Esophagus squamous epithelium (tissue), 5 donors: ENCODE measurements at regions of chr9 and their contacts with region 1.

Region 1: GRCh38 chr9:115013998-115014397 is 83.6 kb upstream of the TNFSF8 start:
- DNase-seq: peak; percentile 15
- H3K4me3 ChIP-seq: no peak overlapping the region
- H3K27ac ChIP-seq: no peak overlapping the region
- H3K4me1 ChIP-seq: peaks cover 0 to 13% (median 7%) of the 10 kb centered on the region in 3 donors
- H3K27me3 ChIP-seq: no peaks in the 10 kb centered on the region
- CTCF ChIP-seq: peak; percentile 78 to 92 (median 86)
- POLR2A ChIP-seq: no peak

Region 2: DNA sequence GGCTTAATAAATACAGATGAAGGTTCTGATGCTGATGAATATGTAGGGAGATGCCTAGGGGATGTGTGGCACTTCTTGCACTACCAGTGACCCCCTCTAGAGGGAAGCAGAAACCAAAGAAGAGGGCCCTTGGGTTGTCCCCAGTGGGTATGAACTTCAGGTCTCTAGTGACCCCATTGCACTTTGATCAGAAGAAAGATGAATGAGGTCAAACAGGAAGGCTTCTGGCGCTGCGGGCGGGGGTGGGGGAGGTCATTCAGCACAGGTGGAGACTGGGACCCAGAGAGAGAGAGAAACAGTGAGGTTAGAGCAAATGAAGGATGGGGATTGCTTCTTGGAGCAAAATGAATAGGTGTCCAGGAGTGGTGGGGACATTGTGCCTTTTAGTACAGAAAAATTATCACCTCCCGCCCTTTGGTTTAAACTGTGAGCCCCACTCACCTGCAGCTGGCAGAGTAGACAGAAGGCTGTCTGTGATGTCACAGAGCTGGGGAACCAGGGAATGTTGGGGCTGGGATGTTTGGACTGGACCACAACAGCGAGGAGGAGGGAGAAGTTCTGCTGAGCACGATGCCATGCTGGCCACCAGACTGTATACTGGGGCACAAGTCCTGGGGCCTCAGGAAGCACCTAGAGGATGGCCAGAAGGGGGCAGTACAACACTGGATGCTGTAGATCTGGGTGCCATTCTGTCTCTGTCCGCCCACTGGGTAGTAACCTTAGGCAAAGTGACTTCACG is 332.2 kb before region 1 on chr9 and contains the start of gene TEX48:
- intact Hi-C with region 1: loop called (anchors 5 kb)
- DNase-seq: peak; percentile 14
- H3K4me3 ChIP-seq: no peak within 1 kb of the TSS
- H3K27ac ChIP-seq: no peak within 1 kb of the TSS
- H3K4me1 ChIP-seq: peaks cover 0 to 4% (median 0%) of the 10 kb centered on the region in 3 donors
- H3K27me3 ChIP-seq: peaks cover 0 to 23% (median 0%) of the 10 kb centered on the region in 4 donors
- CTCF ChIP-seq: peak; percentile 23 to 87 (median 70)
- POLR2A ChIP-seq: no peak
- total RNA-seq, gene TEX48: not detected

Region 3: DNA sequence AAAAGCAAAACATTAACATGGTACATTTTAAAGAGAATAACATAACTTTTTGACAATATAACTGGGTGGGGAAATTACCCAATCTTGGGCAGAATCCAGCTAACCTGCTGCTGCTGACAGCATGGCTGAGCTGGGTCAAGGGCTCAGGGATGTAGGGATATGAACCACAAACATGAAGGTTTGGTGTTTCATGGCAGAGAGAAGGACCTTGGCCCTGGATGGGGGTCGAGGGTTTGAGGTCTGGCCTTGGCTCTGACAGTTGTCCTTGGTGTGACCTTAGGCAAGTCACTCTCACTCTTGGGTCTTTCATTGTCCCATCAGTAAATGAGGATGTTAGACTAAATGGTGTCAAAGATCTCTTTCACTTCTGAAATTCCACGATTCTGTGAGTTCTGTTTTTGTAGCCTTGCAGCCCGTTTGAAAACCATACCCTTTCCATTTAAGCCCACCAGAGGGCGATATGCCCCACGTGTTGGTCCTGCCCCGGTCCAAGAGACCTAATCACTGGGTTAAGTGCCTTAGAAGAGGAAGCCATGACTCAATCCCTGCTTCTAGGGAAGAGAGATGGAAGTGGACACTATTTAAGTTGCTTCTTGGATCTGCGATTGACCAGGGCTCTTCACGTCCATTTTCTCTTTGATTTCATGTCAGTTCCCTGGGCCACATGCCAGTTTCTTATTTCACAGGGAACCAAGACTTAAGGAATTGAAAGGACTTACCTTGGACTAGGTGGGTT is 275.2 kb before region 1 on chr9:
- intact Hi-C with region 1: loop called (anchors 5 kb)
- DNase-seq: peak; percentile 16
- H3K4me3 ChIP-seq: no peak overlapping the region
- H3K27ac ChIP-seq: no peak overlapping the region
- H3K4me1 ChIP-seq: peaks cover 0 to 7% (median 0%) of the 10 kb centered on the region in 3 donors
- H3K27me3 ChIP-seq: no peaks in the 10 kb centered on the region
- CTCF ChIP-seq: peak; percentile 77 to 94 (median 91)
- POLR2A ChIP-seq: no peak

Region 4: GRCh38 chr9:114906908-114907571 is 107.0 kb before region 1 on chr9:
- intact Hi-C with region 1: loop called (anchors 5 kb)
- DNase-seq: no peak
- H3K4me3 ChIP-seq: no peak overlapping the region
- H3K27ac ChIP-seq: no peak overlapping the region
- H3K4me1 ChIP-seq: peaks cover 0 to 45% (median 14%) of the 10 kb centered on the region in 3 donors
- H3K27me3 ChIP-seq: no peaks in the 10 kb centered on the region
- CTCF ChIP-seq: peak; percentile 33 to 63 (median 49)
- POLR2A ChIP-seq: no peak

Region 5: DNA sequence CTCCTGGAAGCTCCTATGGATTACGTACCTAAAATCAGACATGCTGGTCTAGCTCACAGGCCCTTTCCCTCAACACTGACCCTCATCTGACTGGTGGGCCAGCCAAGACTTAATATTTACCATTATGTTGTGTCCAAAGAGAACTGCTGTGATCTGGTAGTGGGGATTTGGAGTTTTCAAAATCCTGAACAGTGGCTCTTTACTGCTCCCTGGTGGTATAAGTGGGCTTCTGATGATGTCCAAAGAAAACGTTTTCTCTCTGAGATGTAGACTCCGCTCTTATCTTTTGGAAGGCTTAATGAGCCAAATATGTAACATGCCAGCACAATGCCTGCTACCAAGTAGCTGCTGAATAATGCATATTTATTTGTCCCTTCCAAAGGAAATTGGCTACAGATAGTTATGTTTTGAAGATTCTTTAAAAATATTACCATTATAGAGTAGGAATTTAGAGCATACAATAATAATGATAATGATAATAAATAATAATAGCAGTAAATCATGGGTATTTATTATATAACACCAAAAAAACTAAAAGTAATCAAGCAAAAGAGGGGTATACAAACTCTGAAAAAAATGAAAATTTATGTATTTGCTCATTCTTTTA is 510.6 kb after region 1 on chr9:
- intact Hi-C with region 1: loop called (anchors 5 kb)
- DNase-seq: no peak
- H3K4me3 ChIP-seq: no peak overlapping the region
- H3K27ac ChIP-seq: no peak overlapping the region
- H3K4me1 ChIP-seq: peaks cover 0 to 7% (median 0%) of the 10 kb centered on the region in 3 donors
- H3K27me3 ChIP-seq: no peaks in the 10 kb centered on the region
- CTCF ChIP-seq: peak in 5 of 6 experiments; percentile 69 to 81 (median 77)
- POLR2A ChIP-seq: no peak